Mucosa of descending colon (tissue), 3 donors: ENCODE measurements at regions of chr1 and their contacts with region 1.

Region 1: DNA sequence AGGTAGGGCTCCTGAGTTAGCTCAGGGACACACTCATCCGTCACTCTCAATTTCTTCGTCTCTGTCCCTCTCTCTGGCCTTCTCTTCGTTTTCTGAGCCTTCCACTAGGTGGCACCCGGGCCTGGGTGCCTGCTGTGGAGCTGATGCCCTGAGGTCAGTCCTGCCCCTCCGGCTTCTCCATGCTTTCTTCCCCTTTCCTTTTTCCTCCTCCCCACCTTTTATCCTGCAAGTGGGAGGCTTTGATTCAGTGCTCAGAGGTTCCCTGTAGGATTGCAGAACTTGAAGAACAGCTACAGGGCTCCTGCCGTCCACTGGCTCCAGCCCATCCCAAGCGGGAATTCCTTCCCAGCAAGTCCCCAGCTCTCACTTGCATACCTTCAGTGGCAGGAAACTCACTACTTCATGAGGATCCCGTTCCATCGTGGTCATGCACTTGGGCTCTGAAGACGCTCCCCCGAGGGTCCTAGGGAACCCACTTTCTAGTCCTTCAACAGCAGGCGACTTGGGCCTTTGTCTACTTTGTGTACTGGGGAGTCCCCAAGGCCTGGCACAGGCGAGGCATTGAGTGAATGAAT is 45.6 kb downstream of the SRRM1 start:
- DNase-seq: peak in 2 of 3 donors; percentile 76 to 85
- ATAC-seq: peak; percentile 95
- H3K4me3 ChIP-seq: no peak overlapping the region
- H3K4me1 ChIP-seq: no peaks in the 10 kb centered on the region
- CTCF ChIP-seq: peak; percentile 55

Region 2: DNA sequence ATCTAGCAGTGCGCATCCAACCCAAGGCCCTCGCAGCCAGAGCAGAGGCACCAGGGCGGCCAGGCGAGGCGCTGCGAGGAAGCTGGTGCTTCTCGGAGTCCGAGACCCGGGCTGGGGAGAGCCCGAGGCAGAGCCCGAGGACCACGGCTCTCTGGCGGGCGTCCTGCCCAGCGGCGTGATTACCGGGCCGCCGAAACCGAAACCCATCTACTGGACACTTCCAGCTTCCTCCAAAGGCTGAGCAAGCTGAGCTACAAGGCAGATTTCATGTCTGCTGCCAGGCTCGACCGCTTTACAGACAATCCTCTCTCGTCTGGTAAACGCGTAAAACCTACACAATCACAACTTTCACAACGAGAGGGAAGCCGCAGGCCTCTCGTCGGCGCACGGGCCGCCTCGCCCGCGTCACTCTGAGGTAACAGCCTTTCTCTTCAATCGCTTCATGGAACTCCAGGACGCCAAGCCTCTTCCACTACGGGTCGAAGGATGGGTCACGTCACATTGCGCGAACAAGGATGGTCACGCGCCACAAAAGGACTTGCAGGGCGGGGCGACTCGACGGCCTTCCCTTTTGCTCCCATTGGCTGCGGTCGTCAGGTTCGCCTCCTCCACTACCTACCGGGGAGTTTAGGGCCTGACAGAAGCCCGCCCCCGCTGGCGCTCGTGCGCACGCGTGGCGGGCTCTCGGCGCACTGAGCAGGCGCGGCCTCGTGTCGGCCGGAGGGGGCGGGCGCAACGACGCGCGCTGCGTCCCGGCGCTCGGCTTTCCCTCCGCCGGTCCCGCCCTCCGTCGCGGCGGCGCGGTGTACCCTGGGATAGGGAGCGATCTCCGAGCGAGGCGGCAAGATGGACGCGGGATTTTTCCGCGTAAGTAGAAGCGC is 46.0 kb before region 1 on chr1 and contains the start of gene SRRM1:
- intact Hi-C with region 1: no loop called
- DNase-seq: peak; percentile 98 to 100 (median 98)
- ATAC-seq: peak; percentile 94
- H3K4me3 ChIP-seq: peak within 1 kb of the TSS; percentile 88
- H3K4me1 ChIP-seq: peaks cover 22% of the 10 kb centered on the region
- CTCF ChIP-seq: no peak
- total RNA-seq, gene SRRM1: 117 to 131 (median 120) TPM

Region 3: DNA sequence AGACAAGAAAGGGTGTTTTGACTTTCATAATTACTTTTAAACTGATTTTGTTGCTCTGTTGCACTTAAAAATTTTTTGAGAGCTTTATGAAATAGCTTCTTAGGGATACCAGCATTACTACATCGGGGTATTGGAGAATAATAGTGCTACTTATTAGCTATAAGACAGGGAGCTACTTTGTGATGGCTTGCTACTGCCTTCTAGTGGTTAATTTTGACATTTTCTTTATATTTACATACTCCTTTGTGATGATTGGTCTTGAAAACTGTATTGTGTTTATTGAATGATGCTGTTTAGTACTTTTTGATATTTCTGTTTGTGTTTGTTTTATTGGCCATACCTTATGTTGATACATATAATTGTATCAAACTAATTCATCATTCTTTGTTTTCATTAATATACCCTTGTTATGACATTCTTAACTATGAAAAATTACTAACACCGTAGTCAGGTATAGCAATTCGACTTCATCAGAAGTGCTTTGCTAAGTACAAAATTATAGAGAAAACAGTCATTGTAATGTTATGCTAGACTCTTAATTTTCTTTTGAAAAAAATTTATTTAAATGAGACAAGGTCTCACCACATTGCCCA is 142.1 kb after region 1 on chr1:
- intact Hi-C with region 1: loop called (anchors 2 kb)
- DNase-seq: no peak
- ATAC-seq: peak; percentile 44
- H3K4me3 ChIP-seq: no peak overlapping the region
- H3K4me1 ChIP-seq: peaks cover 4% of the 10 kb centered on the region
- CTCF ChIP-seq: no peak